PC-3 (cell line): ENCODE measurements at regions of chr1 and their contacts with region 1.

Region 1: DNA sequence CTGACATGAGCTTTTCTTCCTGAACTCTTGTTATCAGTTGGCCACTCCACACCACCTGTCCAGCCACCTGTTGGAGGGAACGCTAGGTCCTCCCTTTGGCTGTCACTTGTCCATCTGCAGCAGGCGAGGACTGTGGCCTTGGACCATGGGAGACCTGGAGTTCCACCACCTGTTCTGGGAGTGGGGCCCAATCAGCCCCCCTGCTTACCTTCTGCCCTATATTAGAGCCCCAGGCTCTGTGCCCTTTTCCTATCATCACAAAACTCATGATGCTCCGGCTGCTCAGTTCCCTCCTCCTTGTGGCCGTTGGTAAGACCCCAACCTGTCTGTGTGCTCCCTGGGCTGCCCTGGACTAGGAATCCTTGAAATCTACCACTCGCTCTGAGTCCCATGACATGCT is at the start of gene CELA3A:
- DNase-seq: no peak
- ATAC-seq: no peak
- H3K4me3 ChIP-seq: no peak within 1 kb of the TSS
- H3K27ac ChIP-seq: no peak within 1 kb of the TSS
- H3K4me1 ChIP-seq: peaks cover 13% of the 10 kb centered on the region; the same call in 1 of the 2 replicates
- H3K27me3 ChIP-seq: no peaks in the 10 kb centered on the region
- CTCF ChIP-seq: no peak
- total RNA-seq, gene CELA3A: not detected in 2 replicates

Region 2: GRCh38 chr1:22018583-22019559 is 17.5 kb after region 1 on chr1:
- CTCF ChIA-PET with region 1: no interaction called
- POLR2A ChIA-PET with region 1: no interaction called
- intact Hi-C with region 1: loop called (anchors 1 kb)
- DNase-seq: peak; percentile 97
- ATAC-seq: peak; percentile 97
- H3K4me3 ChIP-seq: no peak overlapping the region
- H3K27ac ChIP-seq: peak overlapping the region; percentile 82
- H3K4me1 ChIP-seq: peaks cover 16% of the 10 kb centered on the region
- H3K27me3 ChIP-seq: no peaks in the 10 kb centered on the region
- CTCF ChIP-seq: peak; percentile 61

Region 3: GRCh38 chr1:22195802-22196440 is 194.5 kb after region 1 on chr1:
- CTCF ChIA-PET with region 1: no interaction called
- POLR2A ChIA-PET with region 1: no interaction called
- intact Hi-C with region 1: no loop called
- DNase-seq: no peak
- ATAC-seq: no peak
- H3K4me3 ChIP-seq: no peak overlapping the region
- H3K27ac ChIP-seq: no peak overlapping the region
- H3K4me1 ChIP-seq: no peaks in the 10 kb centered on the region
- H3K27me3 ChIP-seq: no peaks in the 10 kb centered on the region; the same call in 1 of the 2 replicates
- CTCF ChIP-seq: no peak